Head of caudate nucleus (tissue), 42 donors: ENCODE measurements at regions of chr14 and their contacts with region 1.

Region 1: GRCh38 chr14:20855652-20856291 is 35.4 kb upstream of the RNASE3 start:
- DNase-seq: peak; percentile 16 to 88 (median 68)

Region 2: GRCh38 chr14:20697273-20698017 is 158.3 kb before region 1 on chr14:
- intact Hi-C with region 1: loop called (anchors 2 kb)
- DNase-seq: peak; percentile 20 to 90 (median 75)

Region 3: GRCh38 chr14:20743256-20743959 is 112.4 kb before region 1 on chr14:
- intact Hi-C with region 1: no loop called
- DNase-seq: no peak

Region 4: GRCh38 chr14:20969341-20969740 is 113.6 kb after region 1 on chr14:
- intact Hi-C with region 1: loop called (anchors 10 kb)
- DNase-seq: no peak

Region 5: DNA sequence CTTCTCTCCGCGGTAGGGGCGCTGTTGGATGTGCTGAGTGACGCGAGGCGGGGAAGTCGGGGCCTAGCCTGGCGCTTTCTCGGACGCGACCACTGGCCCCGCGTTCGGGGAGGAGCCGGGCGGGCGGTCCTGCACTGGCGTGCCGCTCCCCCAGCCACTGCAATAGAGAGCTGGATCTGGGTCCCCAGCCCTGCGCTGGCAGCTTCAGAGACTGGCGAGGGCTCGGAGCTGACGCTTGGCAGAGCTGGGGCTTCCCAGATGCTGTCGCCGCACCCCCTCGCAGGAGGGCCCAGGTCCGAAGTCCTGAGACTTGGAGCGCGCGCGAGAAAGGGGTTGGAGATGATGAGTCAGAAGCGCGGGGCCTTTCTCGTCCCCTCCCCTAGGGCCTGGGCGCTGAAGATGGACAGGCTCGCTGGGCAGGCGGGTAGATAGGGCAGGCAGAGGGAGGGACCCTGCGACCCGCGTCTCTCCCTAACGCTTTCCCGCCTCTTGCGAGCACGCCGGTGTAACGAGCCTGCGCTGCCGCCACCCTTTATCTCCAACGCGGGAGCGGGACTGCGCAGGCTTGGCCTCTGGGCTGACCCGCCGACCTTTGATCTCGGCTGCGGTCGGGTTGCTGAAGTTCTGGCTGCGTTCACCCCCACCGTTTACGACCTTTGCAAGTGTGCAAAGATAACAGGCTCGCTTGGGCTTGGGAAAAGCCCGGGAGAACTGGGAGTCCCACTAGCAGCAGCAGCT is 248.1 kb after region 1 on chr14:
- intact Hi-C with region 1: loop called (anchors 10 kb)
- DNase-seq: peak; percentile 93 to 99 (median 98)

Region 6: DNA sequence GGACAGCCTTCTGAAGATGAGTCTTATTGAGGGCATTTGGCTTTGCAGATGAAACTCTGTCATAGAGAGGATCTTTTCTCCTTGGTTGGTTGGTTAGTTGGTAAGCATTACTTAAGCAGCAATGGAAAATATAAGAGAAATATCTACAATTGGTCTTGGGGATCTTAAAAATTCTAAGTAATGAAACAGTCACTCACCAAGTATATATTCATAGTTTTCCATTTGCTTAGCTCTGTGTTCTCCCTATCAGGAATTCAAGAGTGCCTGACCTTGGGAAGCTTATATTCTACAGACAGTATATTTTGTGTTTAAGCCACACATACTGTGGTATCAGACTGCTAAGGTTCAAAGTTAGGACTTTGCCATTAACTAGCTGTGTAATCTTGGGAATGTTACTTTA is 300.2 kb after region 1 on chr14 and contains the start of gene OR5AU1:
- intact Hi-C with region 1: no loop called
- DNase-seq: no peak

Region 7: GRCh38 chr14:21185491-21185890 is 329.7 kb after region 1 on chr14:
- intact Hi-C with region 1: no loop called
- DNase-seq: no peak